ENCODE measurements at regions of chr20 and their contacts with region 1.

Region 1: GRCh38 chr20:555933-556526 is 12.4 kb upstream of the CSNK2A1 start:
- DNase-seq: no peak
- ATAC-seq: no peak
- H3K4me3 ChIP-seq: no peak overlapping the region
- H3K27ac ChIP-seq: no peak overlapping the region
- H3K4me1 ChIP-seq: no peaks in the 10 kb centered on the region
- H3K27me3 ChIP-seq: peaks cover 0 to 3% (median 2%) of the 10 kb centered on the region in 3 donors
- CTCF ChIP-seq: no peak
- POLR2A ChIP-seq: no peak

Region 2: GRCh38 chr20:676977-677351 is 120.9 kb after region 1 on chr20:
- in situ Hi-C with region 1: no loop called
- intact Hi-C with region 1: no loop called
- DNase-seq: no peak
- ATAC-seq: no peak
- H3K4me3 ChIP-seq: no peak overlapping the region
- H3K27ac ChIP-seq: no peak overlapping the region
- H3K4me1 ChIP-seq: peaks cover 9 to 16% of the 10 kb centered on the region in 2 donors
- H3K27me3 ChIP-seq: peaks cover 32 to 51% (median 45%) of the 10 kb centered on the region in 3 donors
- CTCF ChIP-seq: no peak
- POLR2A ChIP-seq: no peak

Region 3: DNA sequence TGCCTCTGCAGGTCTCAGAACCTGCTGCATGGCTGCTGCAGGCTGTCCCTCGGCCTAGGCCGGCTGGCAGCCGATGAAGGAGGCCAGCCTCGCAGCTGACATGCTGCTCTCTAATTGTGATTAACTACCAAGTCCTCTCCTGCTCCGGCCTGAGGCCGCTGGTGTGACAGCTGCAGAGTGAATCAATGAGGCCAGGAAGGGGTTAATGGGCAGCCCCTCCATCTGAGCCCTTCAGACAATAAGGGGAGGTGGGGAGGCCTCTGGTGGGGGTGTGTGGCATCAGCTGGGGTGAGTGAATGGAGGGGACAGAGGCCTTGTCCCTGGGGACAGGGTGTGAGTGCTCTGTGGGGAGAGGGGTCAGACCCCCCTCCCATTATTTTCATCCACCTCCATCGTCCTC is 177.8 kb after region 1 on chr20:
- in situ Hi-C with region 1: loop called (anchors 5 to 10 kb)
- intact Hi-C with region 1: loop called (anchors 1 kb)
- DNase-seq: no peak
- ATAC-seq: no peak
- H3K4me3 ChIP-seq: no peak overlapping the region
- H3K27ac ChIP-seq: no peak overlapping the region
- H3K4me1 ChIP-seq: no peaks in the 10 kb centered on the region
- H3K27me3 ChIP-seq: peaks cover 8 to 13% (median 12%) of the 10 kb centered on the region in 3 donors
- CTCF ChIP-seq: no peak
- POLR2A ChIP-seq: no peak